Naive thymus-derived CD4-positive, alpha-beta T cell (primary cell): ENCODE measurements at regions of chr13 and their contacts with region 1.

Region 1: GRCh38 chr13:24270639-24271141 is 38.7 kb upstream of the C1QTNF9 start:
- DNase-seq: peak in 8 of 9 donors; percentile 57 to 72 (median 66)
- ATAC-seq: peak; percentile 56
- H3K4me3 ChIP-seq: peak overlapping the region; percentile 56
- H3K4me3 Mint-ChIP-seq: peak overlapping the region; percentile 87 to 99 (median 92)
- H3K27ac ChIP-seq: peak overlapping the region; percentile 94
- H3K27ac Mint-ChIP-seq: peak overlapping the region; percentile 97 to 100 (median 99)
- H3K4me1 ChIP-seq: peaks cover 82 to 83% of the 10 kb centered on the region in 2 donors
- H3K4me1 Mint-ChIP-seq: peaks cover 66 to 97% (median 93%) of the 10 kb centered on the region in 7 donors
- H3K27me3 ChIP-seq: no peaks in the 10 kb centered on the region
- H3K27me3 Mint-ChIP-seq: peaks cover 0 to 3% (median 0%) of the 10 kb centered on the region in 5 donors

Region 2: GRCh38 chr13:24228852-24229458 is 41.7 kb before region 1 on chr13:
- CTCF ChIA-PET with region 1: interaction called, 5 read pairs
- POLR2A ChIA-PET with region 1: interaction called, 4 read pairs
- intact Hi-C with region 1: loop called in 1 of 2 experiments (anchors 1 kb)
- DNase-seq: peak in 6 of 9 donors; percentile 39 to 57 (median 46)
- ATAC-seq: peak; percentile 73
- H3K4me3 ChIP-seq: no peak overlapping the region
- H3K4me3 Mint-ChIP-seq: no peak overlapping the region
- H3K27ac ChIP-seq: no peak overlapping the region
- H3K27ac Mint-ChIP-seq: no peak overlapping the region
- H3K4me1 ChIP-seq: peaks cover 0 to 40% of the 10 kb centered on the region in 2 donors
- H3K4me1 Mint-ChIP-seq: peaks cover 9 to 46% (median 19%) of the 10 kb centered on the region in 7 donors
- H3K27me3 ChIP-seq: no peaks in the 10 kb centered on the region
- H3K27me3 Mint-ChIP-seq: no peaks in the 10 kb centered on the region

Region 3: GRCh38 chr13:24280720-24281119 is 10.0 kb after region 1 on chr13:
- CTCF ChIA-PET with region 1: interaction called, 8 read pairs
- POLR2A ChIA-PET with region 1: interaction called, 637 read pairs
- intact Hi-C with region 1: loop called in 1 of 2 experiments (anchors 1 kb)
- DNase-seq: no peak
- ATAC-seq: peak; percentile 57
- H3K4me3 ChIP-seq: no peak overlapping the region
- H3K4me3 Mint-ChIP-seq: no peak overlapping the region
- H3K27ac ChIP-seq: no peak overlapping the region
- H3K27ac Mint-ChIP-seq: peak overlapping the region; percentile 24 to 87 (median 75)
- H3K4me1 ChIP-seq: peaks cover 30 to 34% of the 10 kb centered on the region in 2 donors
- H3K4me1 Mint-ChIP-seq: peaks cover 46 to 78% (median 69%) of the 10 kb centered on the region in 7 donors
- H3K27me3 ChIP-seq: no peaks in the 10 kb centered on the region
- H3K27me3 Mint-ChIP-seq: no peaks in the 10 kb centered on the region

Region 4: DNA sequence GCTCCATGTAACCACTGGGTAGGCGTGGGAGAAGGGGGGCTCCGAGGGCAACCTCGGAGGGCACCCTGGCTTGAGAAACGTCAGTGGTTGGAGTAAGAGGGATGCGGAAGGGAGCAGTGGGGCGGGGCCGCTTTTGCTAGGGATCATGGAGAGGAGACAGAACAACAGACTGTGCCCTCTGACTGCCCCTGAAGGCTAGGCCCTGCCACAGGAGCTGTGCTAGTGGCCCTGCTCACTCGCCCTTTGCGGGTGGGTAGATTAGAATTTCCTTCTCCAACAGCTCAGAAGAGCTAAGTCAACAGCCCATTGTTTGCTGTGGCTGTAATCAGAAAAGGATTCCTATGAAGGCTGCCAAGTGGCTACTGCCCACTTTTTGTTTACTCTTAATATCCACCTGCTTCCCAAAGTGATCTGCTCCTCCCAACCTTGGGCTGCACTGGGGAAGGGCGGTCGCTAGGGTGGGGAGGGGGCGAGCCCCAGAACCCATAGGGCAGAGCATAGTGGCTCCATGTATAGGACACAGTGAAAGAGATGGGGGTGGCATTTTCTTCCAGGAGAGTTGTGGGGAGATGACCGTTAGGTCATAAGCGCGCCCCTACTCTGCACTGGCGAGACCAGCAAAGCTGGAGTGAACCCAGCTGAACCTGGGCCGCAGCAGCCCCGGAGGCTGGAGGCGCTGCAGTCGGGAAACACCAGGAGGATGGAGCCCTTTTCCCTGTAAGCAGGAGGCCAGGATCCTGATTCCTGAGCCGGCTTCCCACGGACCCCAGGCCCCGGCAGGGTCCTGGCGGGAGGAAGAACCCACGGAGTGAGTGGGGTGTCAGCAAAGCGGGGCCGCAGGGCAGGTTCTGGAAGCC is 36.7 kb after region 1 on chr13:
- CTCF ChIA-PET with region 1: no interaction called
- POLR2A ChIA-PET with region 1: no interaction called
- intact Hi-C with region 1: loop called in 1 of 2 experiments (anchors 5 kb)
- DNase-seq: no peak
- ATAC-seq: peak; percentile 33
- H3K4me3 ChIP-seq: no peak overlapping the region
- H3K4me3 Mint-ChIP-seq: peak overlapping the region in 1 of 10 donors; percentile 11
- H3K27ac ChIP-seq: no peak overlapping the region
- H3K27ac Mint-ChIP-seq: peak overlapping the region in 1 of 9 donors; percentile 14
- H3K4me1 ChIP-seq: no peaks in the 10 kb centered on the region
- H3K4me1 Mint-ChIP-seq: peaks cover 0 to 5% (median 0%) of the 10 kb centered on the region in 7 donors
- H3K27me3 ChIP-seq: no peaks in the 10 kb centered on the region
- H3K27me3 Mint-ChIP-seq: no peaks in the 10 kb centered on the region